CD8-positive, alpha-beta T cell (primary cell): ENCODE measurements at regions of chr7 and their contacts with region 1.

Region 1: GRCh38 chr7:40027545-40027944 is 77.5 kb downstream of the CDK13 start:
- DNase-seq: no peak
- ATAC-seq: no peak
- H3K4me3 ChIP-seq: no peak overlapping the region
- H3K4me3 Mint-ChIP-seq: no peak overlapping the region
- H3K27ac ChIP-seq: no peak overlapping the region
- H3K27ac Mint-ChIP-seq: peak overlapping the region; percentile 62
- H3K4me1 ChIP-seq: no peaks in the 10 kb centered on the region
- H3K4me1 Mint-ChIP-seq: peaks cover 25% of the 10 kb centered on the region
- H3K27me3 ChIP-seq: no peaks in the 10 kb centered on the region
- H3K27me3 Mint-ChIP-seq: no peaks in the 10 kb centered on the region
- CTCF ChIP-seq: no peak

Region 2: GRCh38 chr7:40009301-40009700 is 18.2 kb before region 1 on chr7:
- CTCF ChIA-PET with region 1: interaction called, 4 read pairs
- POLR2A ChIA-PET with region 1: no interaction called
- intact Hi-C with region 1: loop called in 1 of 2 experiments (anchors 1 kb)
- DNase-seq: no peak
- ATAC-seq: no peak
- H3K4me3 ChIP-seq: no peak overlapping the region
- H3K4me3 Mint-ChIP-seq: no peak overlapping the region
- H3K27ac ChIP-seq: no peak overlapping the region
- H3K27ac Mint-ChIP-seq: no peak overlapping the region
- H3K4me1 ChIP-seq: no peaks in the 10 kb centered on the region
- H3K4me1 Mint-ChIP-seq: peaks cover 7% of the 10 kb centered on the region
- H3K27me3 ChIP-seq: no peaks in the 10 kb centered on the region
- H3K27me3 Mint-ChIP-seq: no peaks in the 10 kb centered on the region
- CTCF ChIP-seq: no peak